ENCODE measurements at regions of chr19 and their contacts with region 1.

Region 1: DNA sequence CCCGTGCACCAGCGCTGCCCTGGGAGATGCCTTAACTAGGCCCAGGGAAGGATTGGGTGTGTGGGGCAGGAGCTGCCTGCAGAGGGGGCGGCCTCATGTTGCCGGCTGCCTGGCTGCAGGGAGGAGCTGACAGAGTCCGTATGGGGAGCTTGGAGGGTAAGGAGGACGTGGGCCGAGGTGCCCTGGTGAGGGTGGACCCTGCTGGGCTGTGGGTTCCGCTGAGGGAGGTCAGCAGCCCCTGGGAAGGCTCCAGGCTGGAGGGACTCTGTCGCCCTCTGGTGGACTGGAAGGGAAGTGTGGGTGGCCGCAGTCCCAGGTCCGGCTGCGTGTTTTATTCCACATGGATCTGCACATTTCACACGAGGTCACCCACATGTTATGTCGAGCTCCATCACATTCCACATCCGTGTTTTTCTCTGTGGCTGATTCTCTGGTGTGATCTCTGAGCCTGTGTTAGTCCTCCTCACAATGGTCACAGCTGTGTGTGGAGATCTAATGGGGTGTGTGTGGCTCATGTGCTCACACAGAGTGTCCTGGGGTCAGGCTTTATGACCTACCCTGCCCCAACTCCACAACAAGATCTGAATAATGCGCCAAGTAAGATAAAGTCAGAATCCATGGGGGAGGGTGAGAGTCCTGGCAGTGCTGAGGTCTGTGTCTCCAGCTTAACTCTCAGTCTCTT is 1.8 kb upstream of the CEACAM8 start:
- DNase-seq: peak; percentile 68
- ATAC-seq: peak; percentile 84
- H3K4me3 Mint-ChIP-seq: no peak overlapping the region
- H3K27ac Mint-ChIP-seq: no peak overlapping the region
- H3K4me1 Mint-ChIP-seq: peaks cover 4% of the 10 kb centered on the region
- H3K27me3 Mint-ChIP-seq: peaks cover 15% of the 10 kb centered on the region
- CTCF ChIP-seq: peak; percentile 94

Region 2: DNA sequence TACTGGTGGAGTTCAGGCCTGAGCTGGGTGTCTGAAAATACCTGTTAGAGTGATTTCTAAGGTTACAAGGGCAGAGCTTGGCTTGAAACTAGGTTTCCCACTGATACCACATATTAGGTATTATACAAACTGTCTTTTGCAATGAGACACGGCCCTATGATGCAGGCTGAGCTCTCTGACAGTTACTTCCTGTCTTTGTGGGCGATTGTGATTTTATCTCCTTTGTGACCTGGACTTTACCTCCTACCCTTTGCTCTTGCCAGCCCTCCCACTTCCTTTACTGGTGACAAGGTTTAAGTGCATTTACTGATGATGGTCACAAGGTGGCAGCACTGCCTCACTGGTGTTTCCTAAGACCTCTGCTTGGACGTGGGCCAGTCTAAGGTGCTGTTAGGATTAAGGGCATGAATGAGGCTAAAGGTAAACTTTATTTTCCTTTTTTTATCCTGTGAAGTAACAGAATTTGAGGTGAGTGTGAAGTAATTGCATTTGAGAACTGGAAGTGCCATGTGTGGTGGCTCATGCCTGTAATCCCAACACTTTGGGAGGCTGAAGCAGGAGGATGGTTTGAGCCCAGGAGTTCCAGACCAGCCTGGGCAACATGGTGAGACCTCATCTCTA is 146.1 kb before region 1 on chr19:
- CTCF ChIA-PET with region 1: interaction called, 20 read pairs
- POLR2A ChIA-PET with region 1: no interaction called
- DNase-seq: peak; percentile 68
- ATAC-seq: peak; percentile 94
- H3K4me3 Mint-ChIP-seq: no peak overlapping the region
- H3K27ac Mint-ChIP-seq: no peak overlapping the region
- H3K4me1 Mint-ChIP-seq: peaks cover 19% of the 10 kb centered on the region
- H3K27me3 Mint-ChIP-seq: no peaks in the 10 kb centered on the region; the same call in 1 of the 2 replicates
- CTCF ChIP-seq: peak; percentile 82

Region 3: DNA sequence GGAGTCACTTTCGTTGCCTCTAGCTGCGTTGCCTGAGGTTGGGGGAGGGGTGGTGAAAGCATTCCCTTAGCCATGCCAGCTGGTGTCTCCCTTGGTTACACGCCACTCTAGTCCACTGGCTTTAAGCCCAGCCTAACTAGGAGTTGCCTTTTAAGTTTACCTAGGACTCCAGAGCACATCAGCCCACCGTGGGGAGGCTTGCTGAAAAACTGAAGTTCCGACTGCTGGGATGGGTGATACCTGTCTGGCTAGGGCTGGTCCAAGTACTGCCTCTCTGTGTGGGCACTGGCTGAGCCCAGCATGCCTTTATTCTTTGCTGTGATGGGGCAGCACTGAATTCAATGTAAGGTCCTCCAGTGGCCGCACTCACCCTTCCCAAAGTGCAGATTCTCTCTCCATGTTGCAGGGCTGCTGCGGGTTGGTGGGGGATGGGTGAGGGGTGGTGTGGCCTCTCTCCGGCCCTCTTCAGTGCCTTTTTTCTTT is 56.4 kb before region 1 on chr19:
- CTCF ChIA-PET with region 1: no interaction called
- POLR2A ChIA-PET with region 1: no interaction called
- DNase-seq: no peak
- ATAC-seq: peak; percentile 38
- H3K4me3 Mint-ChIP-seq: no peak overlapping the region
- H3K27ac Mint-ChIP-seq: no peak overlapping the region
- H3K4me1 Mint-ChIP-seq: peaks cover 28% of the 10 kb centered on the region
- H3K27me3 Mint-ChIP-seq: peaks cover 10% of the 10 kb centered on the region
- CTCF ChIP-seq: no peak

Region 4: GRCh38 chr19:42563352-42564210 is 33.0 kb before region 1 on chr19:
- CTCF ChIA-PET with region 1: interaction called, 19 read pairs
- POLR2A ChIA-PET with region 1: no interaction called
- DNase-seq: peak; percentile 56
- ATAC-seq: peak; percentile 92
- H3K4me3 Mint-ChIP-seq: no peak overlapping the region
- H3K27ac Mint-ChIP-seq: no peak overlapping the region
- H3K4me1 Mint-ChIP-seq: peaks cover 14% of the 10 kb centered on the region
- H3K27me3 Mint-ChIP-seq: peaks cover 24% of the 10 kb centered on the region
- CTCF ChIP-seq: peak; percentile 73

Region 5: GRCh38 chr19:42573642-42574041 is 22.9 kb before region 1 on chr19:
- CTCF ChIA-PET with region 1: interaction called, 13 read pairs
- POLR2A ChIA-PET with region 1: no interaction called
- DNase-seq: no peak
- ATAC-seq: no peak
- H3K4me3 Mint-ChIP-seq: no peak overlapping the region
- H3K27ac Mint-ChIP-seq: no peak overlapping the region
- H3K4me1 Mint-ChIP-seq: peaks cover 10% of the 10 kb centered on the region
- H3K27me3 Mint-ChIP-seq: peaks cover 15% of the 10 kb centered on the region
- CTCF ChIP-seq: no peak

Region 6: DNA sequence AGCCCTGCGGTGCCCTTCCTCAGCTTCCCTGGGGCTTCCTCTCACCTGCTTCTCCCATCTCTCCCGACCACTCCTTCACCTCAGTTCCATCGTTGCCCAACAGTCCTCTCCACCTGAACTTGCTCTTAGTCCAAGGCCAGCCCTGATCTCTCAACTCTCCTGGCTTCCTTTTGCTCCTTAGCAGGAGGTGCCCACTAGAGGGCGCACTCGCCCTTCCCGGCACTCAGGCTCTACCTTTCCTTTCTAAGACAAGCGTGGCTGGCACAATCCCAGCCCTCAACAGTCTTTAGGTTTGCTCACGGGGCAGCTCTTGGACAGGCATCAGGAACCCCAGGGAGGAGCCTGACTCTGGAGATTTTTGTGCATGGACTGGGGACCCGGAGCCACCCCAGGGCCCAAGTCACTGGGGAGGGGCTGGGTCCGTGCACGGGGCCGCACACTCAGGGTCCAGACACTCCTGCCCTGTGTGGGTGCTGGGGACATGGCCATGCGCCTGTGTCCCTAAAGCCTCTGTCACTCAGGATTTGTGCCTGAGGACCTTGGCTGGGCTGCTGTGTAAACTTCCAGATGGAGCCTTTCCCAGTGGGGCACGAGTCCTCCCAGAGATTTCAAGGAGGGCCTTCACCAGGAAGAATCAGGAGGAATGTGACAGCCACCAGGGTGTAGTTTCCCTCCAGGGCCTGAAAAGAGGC is 10.3 kb after region 1 on chr19:
- CTCF ChIA-PET with region 1: interaction called, 18 read pairs
- POLR2A ChIA-PET with region 1: no interaction called
- DNase-seq: peak; percentile 92
- ATAC-seq: peak; percentile 95
- H3K4me3 Mint-ChIP-seq: no peak overlapping the region
- H3K27ac Mint-ChIP-seq: no peak overlapping the region
- H3K4me1 Mint-ChIP-seq: peaks cover 4% of the 10 kb centered on the region
- H3K27me3 Mint-ChIP-seq: peaks cover 11% of the 10 kb centered on the region
- CTCF ChIP-seq: peak; percentile 92